K562 (cell line): ENCODE measurements at regions of chr13 and their contacts with region 1.

Region 1: GRCh38 chr13:113357529-113357928 is 6.4 kb downstream of the GRTP1 start:
- DNase-seq: no peak
- ATAC-seq: no peak
- H3K4me3 ChIP-seq: no peak overlapping the region
- H3K27ac ChIP-seq: no peak overlapping the region
- H3K4me1 ChIP-seq: peaks cover 4 to 18% of the 10 kb centered on the region in 2 experiments; a peak in 4 of 5 replicates
- H3K27me3 ChIP-seq: no peaks in the 10 kb centered on the region
- CTCF ChIP-seq: no peak
- EP300 ChIP-seq: no peak
- POLR2A ChIP-seq: no peak
- RAD21 ChIP-seq: no peak

Region 2: DNA sequence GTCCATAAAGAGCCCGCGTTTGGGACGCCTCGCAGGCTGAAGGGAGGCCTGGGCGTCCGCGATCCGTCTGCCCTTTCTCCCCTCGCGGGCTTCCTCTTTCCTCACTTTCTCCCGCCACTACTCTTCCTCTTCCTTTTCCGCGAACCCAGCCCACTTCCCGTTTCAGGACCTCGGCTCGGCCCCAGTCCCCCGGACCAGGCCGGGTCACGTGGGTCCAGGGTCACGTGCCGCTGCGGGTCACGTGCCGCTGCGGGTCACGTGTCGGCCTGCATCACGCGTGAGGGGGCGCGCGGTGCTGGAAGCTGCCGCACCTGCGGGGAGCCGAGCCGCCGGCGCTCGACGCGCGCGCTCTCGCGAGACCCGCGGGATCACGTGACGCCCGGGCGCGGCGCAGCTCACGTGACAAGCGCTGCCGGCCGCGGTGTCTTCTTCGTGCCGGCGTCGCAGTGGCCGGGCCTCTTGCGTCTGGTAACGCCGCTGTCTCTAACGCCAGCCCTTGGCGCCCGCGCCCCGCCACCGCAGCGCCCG is 60.6 kb before region 1 on chr13 and contains the start of gene LAMP1:
- CTCF ChIA-PET with region 1: no interaction called
- POLR2A ChIA-PET with region 1: no interaction called
- in situ Hi-C with region 1: no loop called
- intact Hi-C with region 1: loop called (anchors 5 kb)
- DNase-seq: peak; percentile 93 to 96 (median 94)
- ATAC-seq: peak; percentile 90
- H3K4me3 ChIP-seq: peak within 1 kb of the TSS; percentile 87
- H3K27ac ChIP-seq: peak within 1 kb of the TSS; percentile 87
- H3K4me1 ChIP-seq: peaks cover 4 to 22% of the 10 kb centered on the region in 2 experiments; a peak in 4 of 5 replicates
- H3K27me3 ChIP-seq: no peaks in the 10 kb centered on the region
- CTCF ChIP-seq: no peak; a peak in 1 of 6 replicates
- EP300 ChIP-seq: peak; percentile 63
- POLR2A ChIP-seq: peak; percentile 72
- RAD21 ChIP-seq: no peak
- polyA plus RNA-seq, gene LAMP1: 2.2 to 2.5 TPM

Region 3: DNA sequence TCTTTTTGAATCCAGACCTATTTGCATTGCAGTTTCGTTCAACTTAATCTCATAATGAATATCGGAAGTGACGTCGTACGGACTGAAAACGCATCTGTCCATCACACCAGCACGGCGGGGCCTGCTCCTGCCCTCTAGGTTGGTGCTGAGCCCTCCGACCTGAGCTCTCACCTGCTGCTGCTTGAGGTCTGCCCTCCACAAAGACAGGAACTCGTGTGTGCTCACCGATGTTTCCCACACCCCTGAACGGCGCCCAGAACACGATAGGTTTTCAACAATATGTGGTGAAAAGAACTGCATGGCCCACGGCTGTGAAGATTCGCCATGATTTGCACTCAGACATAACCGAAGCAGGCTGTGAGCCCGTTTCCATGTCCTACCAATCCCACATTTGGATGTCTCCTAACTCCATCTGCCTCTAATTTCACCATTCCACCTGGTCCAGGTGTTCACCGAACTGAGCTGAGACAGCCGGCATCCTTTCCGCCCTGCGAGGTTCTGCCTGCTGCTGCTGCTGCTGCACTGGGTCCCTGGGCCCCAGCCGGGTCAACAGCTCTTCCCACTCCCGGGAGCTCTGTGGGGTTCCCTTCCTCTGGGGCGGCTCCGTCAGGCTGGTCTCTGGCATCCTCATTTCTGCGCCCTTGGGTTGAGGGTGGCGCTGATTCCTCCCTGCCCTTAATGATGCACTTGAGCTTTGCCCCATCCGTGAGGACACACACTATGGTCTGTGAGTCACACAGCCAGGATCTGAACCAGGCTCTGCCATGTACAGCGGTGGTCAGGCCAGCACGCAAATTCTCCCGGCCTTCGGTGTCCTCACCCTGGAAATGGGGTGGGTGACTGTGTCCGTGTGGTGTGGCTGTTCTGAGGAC is 14.5 kb before region 1 on chr13:
- CTCF ChIA-PET with region 1: no interaction called
- POLR2A ChIA-PET with region 1: no interaction called
- in situ Hi-C with region 1: no loop called
- intact Hi-C with region 1: no loop called
- DNase-seq: no peak
- ATAC-seq: no peak
- H3K4me3 ChIP-seq: no peak overlapping the region
- H3K27ac ChIP-seq: no peak overlapping the region
- H3K4me1 ChIP-seq: peaks cover 0 to under 1% of the 10 kb centered on the region in 2 experiments; a peak in 2 of 5 replicates
- H3K27me3 ChIP-seq: no peaks in the 10 kb centered on the region
- CTCF ChIP-seq: no peak
- EP300 ChIP-seq: no peak
- POLR2A ChIP-seq: no peak
- RAD21 ChIP-seq: no peak